ENCODE measurements at regions of chr15 and their contacts with region 1.

Region 1: GRCh38 chr15:39580117-39580484 is 778 bp upstream of the THBS1 start:
- DNase-seq: peak; percentile 85 to 87 (median 86)
- H3K4me3 ChIP-seq: peak overlapping the region; percentile 47 to 76 (median 51)
- H3K4me3 Mint-ChIP-seq: peak overlapping the region; percentile 98
- H3K27ac ChIP-seq: peak overlapping the region in 1 of 2 donors; percentile 79
- H3K27ac Mint-ChIP-seq: peak overlapping the region in 6 of 7 donors; percentile 60 to 92 (median 86)
- H3K4me1 ChIP-seq: peaks cover 24 to 39% of the 10 kb centered on the region in 2 donors
- H3K4me1 Mint-ChIP-seq: peaks cover 42% of the 10 kb centered on the region
- H3K27me3 ChIP-seq: peaks cover 5 to 35% of the 10 kb centered on the region in 2 donors
- H3K27me3 Mint-ChIP-seq: peaks cover 19 to 61% (median 44%) of the 10 kb centered on the region in 3 donors
- CTCF ChIP-seq: peak; percentile 99

Region 2: GRCh38 chr15:39125904-39126303 is 454.2 kb before region 1 on chr15:
- intact Hi-C with region 1: loop called in 1 of 2 experiments (anchors 5 kb)
- DNase-seq: peak; percentile 27 to 45 (median 30)
- H3K4me3 ChIP-seq: no peak overlapping the region
- H3K4me3 Mint-ChIP-seq: no peak overlapping the region
- H3K27ac ChIP-seq: no peak overlapping the region
- H3K27ac Mint-ChIP-seq: no peak overlapping the region
- H3K4me1 ChIP-seq: no peaks in the 10 kb centered on the region
- H3K4me1 Mint-ChIP-seq: no peaks in the 10 kb centered on the region
- H3K27me3 ChIP-seq: no peaks in the 10 kb centered on the region
- H3K27me3 Mint-ChIP-seq: peaks cover 2 to 3% (median 2%) of the 10 kb centered on the region in 3 donors
- CTCF ChIP-seq: peak; percentile 76

Region 3: DNA sequence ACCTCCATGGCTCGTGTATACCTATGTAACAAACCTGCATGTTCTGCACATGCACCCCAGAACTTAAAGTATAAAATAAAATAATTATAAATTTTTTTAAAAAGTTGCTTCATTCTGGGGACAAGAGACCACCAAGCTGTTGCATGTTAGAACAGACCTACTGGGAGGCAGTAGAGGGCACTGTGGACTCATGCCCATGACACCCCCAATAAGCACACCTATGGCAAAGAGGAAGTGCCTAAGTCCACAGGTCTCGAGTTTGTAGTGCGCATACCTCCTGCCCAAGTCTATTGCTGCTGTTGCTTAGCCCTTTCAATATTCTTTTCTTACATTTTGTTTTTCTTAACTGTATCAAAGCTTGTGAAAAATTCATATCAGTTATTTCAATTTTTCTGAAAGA is 267.1 kb before region 1 on chr15:
- intact Hi-C with region 1: loop called (anchors 2 to 5 kb)
- DNase-seq: peak in 2 of 3 donors; percentile 11 to 86
- H3K4me3 ChIP-seq: no peak overlapping the region
- H3K4me3 Mint-ChIP-seq: no peak overlapping the region
- H3K27ac ChIP-seq: no peak overlapping the region
- H3K27ac Mint-ChIP-seq: peak overlapping the region in 5 of 7 donors; percentile 41 to 93 (median 89)
- H3K4me1 ChIP-seq: peaks cover 6 to 20% of the 10 kb centered on the region in 2 donors
- H3K4me1 Mint-ChIP-seq: peaks cover 26% of the 10 kb centered on the region
- H3K27me3 ChIP-seq: no peaks in the 10 kb centered on the region
- H3K27me3 Mint-ChIP-seq: peaks cover 0 to 2% (median 2%) of the 10 kb centered on the region in 3 donors
- CTCF ChIP-seq: peak; percentile 75

Region 4: DNA sequence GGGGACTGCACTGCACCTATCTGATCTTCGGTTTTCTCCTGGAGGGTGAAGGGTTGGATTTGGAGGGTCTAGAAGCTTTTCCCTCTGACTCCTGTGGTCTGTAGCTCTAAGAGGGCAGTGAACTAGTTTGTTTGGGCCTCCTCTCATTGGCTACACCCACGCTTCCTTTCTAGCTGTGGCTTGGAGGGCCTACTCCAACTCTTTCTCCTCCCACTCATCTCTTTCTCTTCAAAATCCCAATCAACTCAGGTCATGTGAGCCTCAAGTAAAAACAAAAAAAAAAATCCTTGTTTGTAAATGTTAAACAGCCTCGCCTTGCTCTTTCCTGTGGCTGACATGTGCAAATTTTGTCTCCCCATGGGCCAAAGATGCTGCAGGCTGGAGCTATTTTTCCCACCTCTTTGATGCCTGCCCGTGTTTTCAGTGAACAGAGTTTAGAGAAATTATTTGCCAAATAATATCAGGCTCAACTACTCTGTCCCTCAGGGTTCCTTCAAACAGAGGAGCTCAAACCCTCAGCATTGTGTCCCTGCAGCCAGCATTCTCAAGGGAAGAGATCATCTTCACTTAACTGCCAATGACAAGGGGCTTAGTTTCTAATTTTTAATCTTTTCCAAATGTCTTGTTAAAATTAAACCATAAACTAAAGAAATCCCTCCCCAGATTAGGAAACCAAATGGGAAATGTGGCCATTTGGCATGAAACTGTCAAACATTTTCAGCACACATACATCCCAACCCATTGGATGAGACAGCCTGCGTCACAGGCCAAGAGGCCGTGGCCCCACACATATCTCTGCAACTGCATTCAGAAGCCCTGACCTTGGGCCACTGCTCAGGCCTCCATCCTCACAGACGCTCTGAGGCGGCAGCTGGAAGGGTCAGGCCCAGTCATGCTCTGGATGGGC is 114.0 kb before region 1 on chr15:
- intact Hi-C with region 1: loop called in 1 of 2 experiments (anchors 10 kb)
- DNase-seq: no peak
- H3K4me3 ChIP-seq: no peak overlapping the region
- H3K4me3 Mint-ChIP-seq: no peak overlapping the region
- H3K27ac ChIP-seq: no peak overlapping the region
- H3K27ac Mint-ChIP-seq: no peak overlapping the region
- H3K4me1 ChIP-seq: peaks cover 30 to 42% of the 10 kb centered on the region in 2 donors
- H3K4me1 Mint-ChIP-seq: peaks cover 33% of the 10 kb centered on the region
- H3K27me3 ChIP-seq: no peaks in the 10 kb centered on the region
- H3K27me3 Mint-ChIP-seq: no peaks in the 10 kb centered on the region
- CTCF ChIP-seq: no peak

Region 5: GRCh38 chr15:39517122-39517855 is 62.8 kb before region 1 on chr15:
- intact Hi-C with region 1: no loop called
- DNase-seq: no peak
- H3K4me3 ChIP-seq: no peak overlapping the region
- H3K4me3 Mint-ChIP-seq: no peak overlapping the region
- H3K27ac ChIP-seq: no peak overlapping the region
- H3K27ac Mint-ChIP-seq: no peak overlapping the region
- H3K4me1 ChIP-seq: peaks cover 0 to 5% of the 10 kb centered on the region in 2 donors
- H3K4me1 Mint-ChIP-seq: peaks cover 6% of the 10 kb centered on the region
- H3K27me3 ChIP-seq: no peaks in the 10 kb centered on the region
- H3K27me3 Mint-ChIP-seq: peaks cover 2 to 4% (median 3%) of the 10 kb centered on the region in 3 donors
- CTCF ChIP-seq: no peak

Measured in CD14-positive monocyte (primary cell).